ENCODE measurements at regions of chr2 and their contacts with region 1.

Region 1: DNA sequence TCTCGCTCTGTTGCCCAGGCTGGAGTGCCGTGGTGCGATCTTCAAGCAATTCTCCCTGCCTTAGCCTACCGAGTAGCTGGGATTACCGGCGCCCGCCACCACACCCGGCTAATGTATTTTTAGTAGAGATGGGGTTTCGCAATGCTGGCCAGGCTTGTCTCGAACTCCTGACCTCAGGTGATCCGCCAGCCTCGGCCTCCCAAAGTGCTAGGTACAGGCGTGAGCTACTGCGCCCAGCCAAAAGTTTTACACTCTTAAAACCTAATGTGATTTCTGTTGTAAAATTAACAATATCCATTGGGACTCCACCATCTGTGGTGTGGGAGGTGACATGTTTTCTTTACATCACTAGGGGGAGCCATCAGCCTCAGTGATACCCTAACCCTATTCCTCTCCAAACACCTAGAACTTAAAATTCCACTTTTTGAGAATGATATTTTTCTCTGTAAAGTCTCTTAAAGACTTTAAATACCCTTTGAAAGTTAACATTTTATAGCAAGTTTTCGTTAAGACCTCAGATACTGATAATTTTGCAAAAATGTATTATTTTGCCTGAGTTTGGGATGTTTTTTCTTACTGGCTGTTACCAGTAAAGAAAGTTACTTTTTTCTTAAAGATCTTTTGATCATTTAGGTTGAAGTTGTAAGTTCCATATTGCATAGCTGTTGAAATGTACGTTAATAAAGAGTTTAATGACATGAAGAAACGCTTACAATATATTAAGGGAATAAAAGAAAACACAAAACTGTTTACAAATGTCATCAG is 11.6 kb upstream of the EIF2AK2 start:
- DNase-seq: peak in 4 of 5 donors; percentile 32 to 45 (median 36)
- H3K4me3 ChIP-seq: no peak overlapping the region
- H3K4me3 Mint-ChIP-seq: no peak overlapping the region
- H3K27ac ChIP-seq: no peak overlapping the region
- H3K27ac Mint-ChIP-seq: no peak overlapping the region
- H3K4me1 ChIP-seq: no peaks in the 10 kb centered on the region
- H3K4me1 Mint-ChIP-seq: no peaks in the 10 kb centered on the region
- H3K27me3 ChIP-seq: no peaks in the 10 kb centered on the region
- H3K27me3 Mint-ChIP-seq: no peaks in the 10 kb centered on the region

Region 2: DNA sequence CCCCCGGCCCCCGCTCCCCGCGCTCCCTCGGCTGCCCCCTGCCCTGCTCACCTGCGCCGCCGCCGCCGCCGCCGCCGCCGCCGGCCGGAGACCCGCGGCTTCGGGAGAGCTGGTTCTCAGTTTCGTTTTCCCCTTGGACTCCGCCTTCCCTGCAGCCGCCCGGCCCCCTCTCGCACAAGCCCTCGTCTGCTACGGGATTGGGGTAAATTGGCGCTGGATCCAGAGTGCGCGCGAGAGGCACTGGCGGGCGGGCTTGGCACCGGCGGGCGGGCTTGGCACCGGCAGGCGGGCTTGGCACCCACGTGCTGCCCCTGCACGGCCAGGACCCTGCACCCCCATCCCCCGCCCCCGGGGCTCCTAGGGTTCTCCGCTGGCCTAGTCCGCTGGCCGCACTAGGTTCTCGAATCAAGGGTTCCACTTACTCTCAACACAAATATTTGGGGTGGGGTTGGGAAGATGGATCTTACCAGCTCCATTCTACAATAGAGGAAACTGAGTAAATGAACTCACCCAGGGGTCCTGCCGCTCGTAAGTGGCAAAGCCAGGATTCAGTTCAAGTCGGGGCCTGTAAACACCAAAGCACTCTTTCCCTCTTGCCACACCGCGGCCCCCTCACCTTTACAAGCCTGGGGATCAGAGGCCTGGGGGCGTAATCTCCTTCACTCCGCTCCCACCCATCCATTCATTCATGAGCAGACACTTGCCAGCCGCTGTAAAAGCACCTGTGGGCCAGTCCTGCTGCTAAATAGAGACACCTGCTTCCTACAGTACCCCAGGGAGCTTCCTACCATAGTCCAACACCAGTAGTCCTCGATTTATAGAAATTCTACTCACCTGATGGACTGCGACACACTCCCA is 11.3 kb before region 1 on chr2 and contains the start of gene EIF2AK2:
- CTCF ChIA-PET with region 1: interaction called, 25 read pairs
- POLR2A ChIA-PET with region 1: no interaction called
- intact Hi-C with region 1: no loop called
- DNase-seq: peak; percentile 84 to 90 (median 87)
- H3K4me3 ChIP-seq: peak within 1 kb of the TSS; percentile 62 to 63
- H3K4me3 Mint-ChIP-seq: peak within 1 kb of the TSS; percentile 88 to 96 (median 94)
- H3K27ac ChIP-seq: peak within 1 kb of the TSS; percentile 72
- H3K27ac Mint-ChIP-seq: peak within 1 kb of the TSS; percentile 86 to 96 (median 92)
- H3K4me1 ChIP-seq: peaks cover 26% of the 10 kb centered on the region
- H3K4me1 Mint-ChIP-seq: peaks cover 34 to 54% (median 49%) of the 10 kb centered on the region in 4 donors
- H3K27me3 ChIP-seq: no peaks in the 10 kb centered on the region
- H3K27me3 Mint-ChIP-seq: no peaks in the 10 kb centered on the region
- total RNA-seq, gene EIF2AK2: 28.8 to 31.6 TPM

Region 3: DNA sequence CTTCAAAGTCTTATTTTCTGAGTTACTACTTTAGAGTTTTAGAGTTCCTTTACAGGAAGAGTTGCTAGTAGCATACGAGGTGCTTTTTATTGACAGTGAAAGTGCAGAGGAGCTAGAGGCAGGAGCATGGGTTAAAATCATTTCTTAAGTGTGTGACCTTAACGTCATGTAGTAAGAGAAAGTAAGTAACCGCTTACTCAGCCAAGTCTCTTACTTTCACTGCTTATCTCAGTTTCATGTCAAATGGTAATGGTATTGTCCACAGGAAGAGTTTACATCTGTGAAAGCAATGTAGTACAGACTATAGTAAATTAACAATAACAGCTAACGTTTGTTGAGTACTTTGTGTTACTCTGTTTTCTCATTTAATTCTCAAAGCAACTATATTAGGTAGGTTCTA is 75.6 kb after region 1 on chr2:
- CTCF ChIA-PET with region 1: no interaction called
- POLR2A ChIA-PET with region 1: no interaction called
- intact Hi-C with region 1: no loop called
- DNase-seq: peak in 3 of 5 donors; percentile 6 to 22 (median 16)
- H3K4me3 ChIP-seq: no peak overlapping the region
- H3K4me3 Mint-ChIP-seq: peak overlapping the region in 4 of 8 donors; percentile 22 to 64 (median 50)
- H3K27ac ChIP-seq: peak overlapping the region; percentile 54
- H3K27ac Mint-ChIP-seq: peak overlapping the region in 6 of 7 donors; percentile 62 to 96 (median 88)
- H3K4me1 ChIP-seq: peaks cover 22% of the 10 kb centered on the region
- H3K4me1 Mint-ChIP-seq: peaks cover 8 to 31% (median 24%) of the 10 kb centered on the region in 4 donors
- H3K27me3 ChIP-seq: no peaks in the 10 kb centered on the region
- H3K27me3 Mint-ChIP-seq: no peaks in the 10 kb centered on the region

Region 4: GRCh38 chr2:37283207-37283606 is 114.8 kb after region 1 on chr2:
- CTCF ChIA-PET with region 1: interaction called, 4 read pairs
- POLR2A ChIA-PET with region 1: no interaction called
- intact Hi-C with region 1: loop called (anchors 5 kb)
- DNase-seq: no peak
- H3K4me3 ChIP-seq: no peak overlapping the region
- H3K4me3 Mint-ChIP-seq: no peak overlapping the region
- H3K27ac ChIP-seq: no peak overlapping the region
- H3K27ac Mint-ChIP-seq: peak overlapping the region in 1 of 7 donors; percentile 25
- H3K4me1 ChIP-seq: no peaks in the 10 kb centered on the region
- H3K4me1 Mint-ChIP-seq: no peaks in the 10 kb centered on the region
- H3K27me3 ChIP-seq: no peaks in the 10 kb centered on the region
- H3K27me3 Mint-ChIP-seq: no peaks in the 10 kb centered on the region

Region 5: DNA sequence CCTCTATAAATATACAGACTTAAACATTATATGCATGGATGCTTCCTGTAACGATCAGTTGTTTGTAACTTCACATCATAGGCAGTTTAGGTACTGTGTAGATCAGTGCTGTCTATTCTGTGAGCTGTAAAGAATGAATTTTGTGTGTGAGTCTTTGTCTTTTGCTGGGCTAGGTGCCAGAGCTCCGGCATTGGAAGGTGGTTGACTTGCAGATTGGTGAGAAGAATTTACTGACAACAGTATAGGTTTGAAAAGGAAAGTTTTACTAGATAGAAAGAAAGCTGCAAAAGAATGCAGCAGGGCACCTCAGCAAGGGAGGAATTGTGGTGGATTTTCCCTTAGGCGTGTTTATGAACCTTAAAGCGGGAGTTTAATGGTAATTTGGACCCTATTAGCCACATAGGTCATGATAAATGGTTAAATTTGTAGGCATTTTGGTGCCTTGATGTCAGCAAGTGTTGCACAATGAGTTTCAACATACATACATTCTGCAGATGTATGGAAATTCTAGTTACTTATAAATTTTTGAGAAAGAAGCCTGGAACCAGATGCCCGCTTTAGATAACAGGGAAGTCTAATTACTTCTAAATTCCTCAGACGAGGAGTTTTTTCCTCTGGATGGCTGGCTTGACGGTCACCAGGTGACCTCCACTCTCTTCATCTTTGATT is 169.4 kb after region 1 on chr2:
- CTCF ChIA-PET with region 1: no interaction called
- POLR2A ChIA-PET with region 1: no interaction called
- intact Hi-C with region 1: no loop called
- DNase-seq: no peak
- H3K4me3 ChIP-seq: no peak overlapping the region
- H3K4me3 Mint-ChIP-seq: no peak overlapping the region
- H3K27ac ChIP-seq: no peak overlapping the region
- H3K27ac Mint-ChIP-seq: no peak overlapping the region
- H3K4me1 ChIP-seq: no peaks in the 10 kb centered on the region
- H3K4me1 Mint-ChIP-seq: no peaks in the 10 kb centered on the region
- H3K27me3 ChIP-seq: no peaks in the 10 kb centered on the region
- H3K27me3 Mint-ChIP-seq: peaks cover 0 to 2% of the 10 kb centered on the region in 2 donors

Region 6: DNA sequence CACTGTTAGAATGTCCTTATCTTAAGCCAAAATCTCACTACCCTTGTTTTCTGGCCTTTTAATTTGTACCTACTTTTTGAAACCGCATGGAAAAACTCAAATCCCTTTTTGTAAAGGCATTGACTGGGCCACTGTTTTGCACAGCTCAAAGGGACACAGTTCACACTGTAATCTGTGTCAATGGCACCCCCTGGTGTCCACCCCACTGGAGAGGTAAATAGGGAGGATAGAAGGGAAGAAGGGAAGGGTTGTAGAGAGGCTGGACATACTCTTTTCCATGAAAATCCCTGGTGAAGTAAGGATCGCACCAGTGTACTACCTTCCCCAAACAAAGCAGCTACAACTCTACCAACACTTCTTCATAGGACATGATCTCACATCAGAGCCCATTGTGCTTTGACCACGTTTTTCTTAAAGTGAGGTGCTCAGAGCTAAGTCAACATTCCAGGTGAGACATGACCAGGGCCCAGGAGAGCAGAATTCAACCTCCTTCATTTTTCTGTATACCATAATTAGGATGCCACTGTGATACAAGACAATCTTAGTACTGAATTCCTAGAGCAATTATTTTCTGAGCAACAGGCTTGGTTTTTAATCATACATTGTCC is 664.3 kb after region 1 on chr2:
- CTCF ChIA-PET with region 1: interaction called, 4 read pairs
- POLR2A ChIA-PET with region 1: no interaction called
- intact Hi-C with region 1: loop called (anchors 2 kb)
- DNase-seq: peak; percentile 69 to 75 (median 74)
- H3K4me3 ChIP-seq: no peak overlapping the region
- H3K4me3 Mint-ChIP-seq: no peak overlapping the region
- H3K27ac ChIP-seq: no peak overlapping the region
- H3K27ac Mint-ChIP-seq: peak overlapping the region in 2 of 7 donors; percentile 16 to 48
- H3K4me1 ChIP-seq: peaks cover 16% of the 10 kb centered on the region
- H3K4me1 Mint-ChIP-seq: peaks cover 5 to 26% (median 11%) of the 10 kb centered on the region in 4 donors
- H3K27me3 ChIP-seq: no peaks in the 10 kb centered on the region
- H3K27me3 Mint-ChIP-seq: no peaks in the 10 kb centered on the region